ENCODE measurements at regions of chr1 and their contacts with region 1.

Region 1: GRCh38 chr1:6245086-6245868 is 1.3 kb downstream of the HES3 start:
- DNase-seq: peak; percentile 78 to 92 (median 85)
- ATAC-seq: peak; percentile 89
- H3K4me3 ChIP-seq: no peak overlapping the region
- H3K27ac ChIP-seq: no peak overlapping the region
- H3K4me1 ChIP-seq: peaks cover 9 to 47% of the 10 kb centered on the region in 2 donors
- H3K27me3 ChIP-seq: peaks cover 77 to 100% of the 10 kb centered on the region in 2 donors
- CTCF ChIP-seq: peak; percentile 68 to 72

Region 2: DNA sequence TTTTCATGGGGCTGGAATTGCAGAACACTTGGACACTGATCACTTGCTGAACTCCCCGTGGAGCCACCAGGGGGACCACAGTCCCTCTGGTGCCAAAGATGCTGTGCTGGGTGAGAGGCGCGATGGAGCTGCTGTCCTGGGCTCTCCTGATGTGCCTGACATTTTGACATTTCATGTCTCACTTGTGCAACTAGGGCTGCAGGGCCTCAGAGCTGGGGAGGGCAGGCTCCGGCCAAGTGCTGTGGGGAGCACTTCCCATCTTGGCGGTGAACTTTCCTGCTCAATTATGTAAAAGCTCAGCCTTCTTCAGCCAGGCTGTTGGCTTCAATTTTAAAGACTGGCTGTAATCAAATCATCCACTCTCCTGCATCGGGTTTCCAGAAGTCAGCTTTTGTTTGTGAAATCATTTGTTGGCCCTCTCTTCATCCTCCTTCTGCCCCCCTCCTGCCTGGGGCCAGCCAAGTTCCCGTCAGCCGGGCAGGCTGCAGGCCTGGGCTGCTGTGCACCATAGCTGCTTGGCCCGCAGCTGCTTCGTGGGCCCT is 162.8 kb before region 1 on chr1:
- intact Hi-C with region 1: no loop called
- DNase-seq: peak in 3 of 4 donors; percentile 51 to 77 (median 53)
- ATAC-seq: peak; percentile 50
- H3K4me3 ChIP-seq: no peak overlapping the region
- H3K27ac ChIP-seq: no peak overlapping the region
- H3K4me1 ChIP-seq: peaks cover 0 to 3% of the 10 kb centered on the region in 2 donors
- H3K27me3 ChIP-seq: no peaks in the 10 kb centered on the region
- CTCF ChIP-seq: no peak

Region 3: DNA sequence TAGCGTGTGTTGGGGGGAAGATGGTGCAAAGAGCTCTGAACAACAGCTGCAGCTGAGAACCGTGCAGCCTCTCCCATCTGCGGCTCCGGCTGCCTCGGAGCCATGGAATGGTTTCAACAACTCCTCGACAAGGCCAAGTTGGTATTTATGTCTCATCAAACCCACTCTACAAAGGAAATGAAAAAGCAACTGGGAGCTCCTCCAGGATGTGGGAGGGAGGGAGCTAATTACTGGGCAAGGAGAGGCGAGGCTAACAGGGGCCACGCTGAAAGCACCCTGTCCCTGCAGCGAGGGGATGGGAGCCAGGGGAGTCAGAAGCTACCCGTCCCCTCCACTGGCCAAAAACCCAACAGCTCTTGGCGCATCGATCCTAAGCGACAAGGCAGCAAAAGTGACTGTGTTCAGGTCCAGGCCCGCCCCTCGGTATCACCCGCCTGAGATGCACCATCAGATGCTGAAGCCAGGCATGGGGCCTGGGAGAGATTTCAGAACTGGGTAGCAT is 85.2 kb after region 1 on chr1:
- intact Hi-C with region 1: no loop called
- DNase-seq: peak in 2 of 4 donors; percentile 73 to 85
- ATAC-seq: peak; percentile 35
- H3K4me3 ChIP-seq: no peak overlapping the region
- H3K27ac ChIP-seq: no peak overlapping the region
- H3K4me1 ChIP-seq: no peaks in the 10 kb centered on the region
- H3K27me3 ChIP-seq: no peaks in the 10 kb centered on the region
- CTCF ChIP-seq: no peak

Region 4: DNA sequence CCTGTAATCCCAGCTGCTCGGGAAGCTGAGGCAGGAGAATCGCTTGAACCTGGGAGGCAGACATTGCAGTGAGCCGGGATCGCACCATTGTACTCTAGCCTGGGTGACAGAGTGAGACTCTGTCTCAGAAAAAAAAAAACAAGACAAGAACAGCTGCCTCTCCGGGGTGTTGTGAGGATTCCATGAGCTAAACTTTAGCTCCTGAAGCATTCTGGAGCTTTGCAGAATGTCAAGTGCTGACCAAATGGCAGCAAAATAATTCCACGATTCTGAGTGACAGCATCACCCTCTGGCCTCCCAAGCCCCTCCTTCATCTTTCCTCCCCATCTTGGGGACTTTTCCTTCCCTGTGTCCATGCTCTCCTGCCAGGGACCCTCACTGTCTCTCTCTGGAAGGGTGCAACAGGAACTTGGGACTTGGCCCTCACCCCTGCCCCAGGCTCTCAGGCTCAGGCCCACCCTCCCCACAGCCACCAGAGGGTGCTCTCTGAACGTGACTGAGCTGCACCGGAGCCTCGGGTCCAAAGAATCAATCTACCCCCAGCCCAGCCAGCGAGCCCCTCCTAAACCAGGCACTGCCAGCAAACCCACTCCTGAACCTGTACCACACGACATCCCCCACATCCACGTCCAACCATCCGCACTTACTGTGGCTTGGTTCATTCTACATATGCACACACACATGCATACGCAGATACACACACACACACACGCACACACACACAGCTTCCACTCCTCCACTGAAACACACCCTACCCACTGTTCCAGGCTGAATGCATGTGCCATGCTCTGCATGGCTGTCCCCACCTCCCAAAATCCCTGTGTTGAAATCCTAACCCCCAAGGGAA is 102.6 kb after region 1 on chr1:
- intact Hi-C with region 1: loop called in 1 of 2 experiments (anchors 5 kb)
- DNase-seq: peak in 1 of 4 donors; percentile 44
- ATAC-seq: peak; percentile 47
- H3K4me3 ChIP-seq: no peak overlapping the region
- H3K27ac ChIP-seq: peak overlapping the region; percentile 39 to 70
- H3K4me1 ChIP-seq: peaks cover 0 to 15% of the 10 kb centered on the region in 2 donors
- H3K27me3 ChIP-seq: no peaks in the 10 kb centered on the region
- CTCF ChIP-seq: peak; percentile 46 to 47

Region 5: DNA sequence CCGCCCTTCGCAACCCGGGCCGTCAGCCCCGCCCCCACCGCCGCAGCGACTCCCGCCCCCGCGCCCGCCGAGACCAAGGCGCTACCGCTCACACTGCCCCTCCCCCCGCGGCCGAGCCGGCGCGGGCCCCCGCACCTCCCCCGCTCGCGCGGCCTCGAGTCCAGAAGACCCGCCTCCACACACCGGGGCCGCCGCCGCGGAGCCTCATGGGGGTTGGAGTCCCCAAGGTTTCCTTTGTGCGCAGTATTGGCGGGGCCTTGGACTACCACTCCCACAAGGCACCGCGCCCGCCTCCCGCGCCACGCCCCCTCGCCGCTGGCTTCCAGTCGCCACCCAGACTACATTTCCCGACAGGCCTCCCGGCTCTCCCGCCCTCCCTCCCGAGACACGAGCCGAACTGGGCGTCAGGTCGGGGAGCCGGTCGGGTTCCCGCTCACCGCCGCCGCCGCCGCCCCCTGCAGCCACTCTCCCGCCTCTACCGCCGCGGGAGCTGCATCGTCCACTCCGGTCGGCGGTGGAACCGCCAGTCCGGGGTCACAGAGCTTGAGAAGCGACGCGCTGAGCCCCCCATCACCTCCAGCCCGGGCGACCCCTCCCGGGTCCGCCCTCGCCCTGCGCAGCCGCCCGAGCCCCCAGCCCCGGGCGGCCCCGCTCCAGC is 368.2 kb after region 1 on chr1 and contains the start of gene PHF13:
- intact Hi-C with region 1: no loop called
- DNase-seq: peak; percentile 97 to 100 (median 100)
- ATAC-seq: peak; percentile 98
- H3K4me3 ChIP-seq: peak within 1 kb of the TSS; percentile 85 to 95
- H3K27ac ChIP-seq: peak within 1 kb of the TSS; percentile 90 to 94
- H3K4me1 ChIP-seq: peaks cover 7 to 30% of the 10 kb centered on the region in 2 donors
- H3K27me3 ChIP-seq: peaks cover 0 to 9% of the 10 kb centered on the region in 2 donors
- CTCF ChIP-seq: no peak
- polyA plus RNA-seq, gene PHF13: 17.6 to 24.8 (median 19.9) TPM